Head of caudate nucleus (tissue), 42 donors: ENCODE measurements at regions of chr4 and their contacts with region 1.

Region 1: DNA sequence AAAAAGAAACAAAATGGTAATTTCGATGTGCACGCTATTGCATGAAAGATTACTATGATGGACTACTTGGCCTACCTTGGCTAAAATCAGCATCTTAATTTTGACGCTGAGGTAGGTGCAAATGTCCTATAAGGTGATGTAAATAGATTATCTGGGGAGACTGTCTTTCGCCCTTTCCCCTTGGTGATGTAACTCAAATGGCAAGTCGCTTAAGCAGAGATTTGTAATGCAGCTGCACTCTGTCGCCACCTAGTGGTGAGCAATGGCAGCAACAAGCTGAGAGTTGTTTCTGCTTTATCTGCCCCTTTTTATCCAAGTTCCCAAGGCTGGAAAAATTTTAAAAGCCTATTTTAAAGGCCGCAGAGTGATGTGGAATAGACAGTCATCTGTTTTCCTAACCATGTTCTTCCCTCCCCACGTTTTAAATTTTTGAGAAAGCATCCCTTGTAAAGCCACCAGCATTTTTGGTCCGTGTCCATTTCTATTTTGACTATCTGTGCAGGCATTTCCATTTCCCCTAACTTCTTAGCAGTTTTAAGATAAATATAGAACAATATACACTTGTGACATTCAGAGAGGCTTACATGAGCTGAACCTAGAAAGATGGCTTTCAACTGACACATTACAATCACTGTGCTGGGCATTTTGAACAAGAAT is 62.4 kb upstream of the PDLIM3 start:
- DNase-seq: peak in 41 of 42 donors; percentile 68 to 94 (median 83)

Region 2: DNA sequence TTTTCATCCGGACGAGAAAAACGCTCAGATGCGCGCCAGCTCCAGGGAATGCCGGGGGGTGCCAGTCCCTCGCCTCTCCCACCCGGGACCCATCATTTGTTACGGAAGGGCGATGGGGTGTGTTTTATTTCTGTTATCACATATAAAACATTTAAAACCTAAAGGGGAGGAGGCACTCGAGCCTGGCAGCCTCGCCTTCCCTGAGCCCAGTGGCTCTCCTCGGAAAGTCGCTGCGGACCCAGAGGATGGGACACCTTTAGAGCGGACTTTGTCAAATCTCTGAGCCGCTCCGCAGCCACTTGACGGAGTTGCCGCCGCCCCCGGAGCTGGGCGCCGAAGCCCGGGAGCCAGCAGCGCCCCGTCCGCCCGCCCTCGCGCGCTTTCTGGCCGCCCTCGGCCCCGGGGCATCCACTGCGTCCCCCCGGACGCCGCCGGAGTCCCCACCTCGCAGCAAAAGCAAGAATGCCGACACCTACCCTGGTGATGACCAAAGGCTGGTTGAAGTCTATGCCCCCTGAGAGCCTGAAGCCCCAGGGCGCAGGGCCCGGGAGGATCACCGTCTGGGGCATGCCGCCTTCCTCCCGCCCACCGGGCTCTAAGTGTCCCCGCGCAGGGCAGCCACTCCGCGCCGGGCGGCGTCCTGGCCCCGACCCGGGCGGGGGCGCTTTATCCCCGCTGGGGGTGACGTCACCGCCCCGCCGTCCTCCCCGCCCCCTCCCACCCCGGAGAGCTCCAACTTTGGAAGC is 62.6 kb before region 1 on chr4 and contains the start of gene PDLIM3:
- intact Hi-C with region 1: loop called (anchors 10 kb)
- DNase-seq: peak; percentile 20 to 89 (median 76)